ENCODE measurements at regions of chr4 and their contacts with region 1.

Region 1: GRCh38 chr4:147772459-147772969 is 40.6 kb downstream of the ARHGAP10 start:
- DNase-seq: no peak
- ATAC-seq: peak; percentile 68 to 76 (median 76)
- H3K4me3 ChIP-seq: peak overlapping the region; percentile 13
- H3K27ac ChIP-seq: peak overlapping the region; percentile 90
- H3K4me1 ChIP-seq: peaks cover 84% of the 10 kb centered on the region
- H3K27me3 ChIP-seq: no peaks in the 10 kb centered on the region
- CTCF ChIP-seq: no peak

Region 2: GRCh38 chr4:147674496-147674895 is 98.0 kb before region 1 on chr4:
- intact Hi-C with region 1: no loop called
- DNase-seq: no peak
- ATAC-seq: no peak
- H3K4me3 ChIP-seq: no peak overlapping the region
- H3K27ac ChIP-seq: no peak overlapping the region
- H3K4me1 ChIP-seq: no peaks in the 10 kb centered on the region
- H3K27me3 ChIP-seq: no peaks in the 10 kb centered on the region
- CTCF ChIP-seq: no peak

Region 3: GRCh38 chr4:147822128-147822527 is 49.6 kb after region 1 on chr4:
- intact Hi-C with region 1: loop called in 1 of 2 experiments (anchors 5 kb)
- DNase-seq: peak; percentile 83 to 91
- ATAC-seq: peak; percentile 64 to 82 (median 79)
- H3K4me3 ChIP-seq: no peak overlapping the region
- H3K27ac ChIP-seq: peak overlapping the region; percentile 81
- H3K4me1 ChIP-seq: peaks cover 61% of the 10 kb centered on the region
- H3K27me3 ChIP-seq: no peaks in the 10 kb centered on the region
- CTCF ChIP-seq: no peak

Measured in psoas muscle (tissue), 8 donors.